ENCODE measurements at regions of chr12 and their contacts with region 1.

Region 1: DNA sequence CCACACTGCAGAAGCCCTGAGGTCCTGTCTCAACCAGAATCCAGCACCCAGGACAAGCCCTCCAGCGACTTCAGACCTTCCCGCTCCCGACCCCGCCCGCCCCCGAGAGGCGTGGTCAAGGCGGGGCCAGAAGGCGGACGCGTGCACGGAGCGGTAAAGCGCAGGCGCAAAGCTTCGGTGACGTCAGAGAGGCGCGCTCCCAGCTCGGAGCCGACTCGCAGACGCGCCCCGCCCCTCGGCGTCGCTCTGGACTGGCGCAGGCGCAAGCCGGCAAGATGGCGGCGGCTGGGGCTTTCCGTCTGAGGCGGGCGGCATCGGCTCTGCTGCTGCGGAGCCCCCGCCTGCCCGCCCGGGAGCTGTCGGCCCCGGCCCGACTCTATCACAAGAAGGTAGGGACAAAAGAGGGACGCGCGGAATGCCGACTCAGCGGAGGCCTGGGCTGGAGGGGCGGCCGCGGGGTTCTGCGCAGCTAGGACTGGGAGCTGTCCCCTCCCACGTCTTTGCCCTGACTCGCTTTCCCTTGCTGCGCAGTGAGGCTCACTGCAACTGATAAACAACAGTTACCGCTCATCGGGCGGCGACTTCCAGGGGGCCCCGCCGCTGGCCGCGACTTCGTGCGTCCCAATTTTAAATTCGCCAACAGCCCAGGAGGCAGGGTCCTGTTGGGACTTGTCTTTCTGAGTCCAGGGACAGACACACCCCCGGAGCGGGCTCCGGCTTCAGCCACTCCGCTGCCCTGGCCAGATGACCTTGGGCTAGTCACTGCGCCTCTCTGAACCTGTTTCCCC is at the start of gene ISCU:
- DNase-seq: peak; percentile 98
- H3K4me3 Mint-ChIP-seq: peak within 1 kb of the TSS; percentile 96
- H3K27ac Mint-ChIP-seq: peak within 1 kb of the TSS; percentile 99
- H3K4me1 Mint-ChIP-seq: peaks cover 22% of the 10 kb centered on the region
- H3K27me3 Mint-ChIP-seq: no peaks in the 10 kb centered on the region
- CTCF ChIP-seq: no peak
- total RNA-seq, gene ISCU: 115 and 125 TPM in 2 replicates

Region 2: DNA sequence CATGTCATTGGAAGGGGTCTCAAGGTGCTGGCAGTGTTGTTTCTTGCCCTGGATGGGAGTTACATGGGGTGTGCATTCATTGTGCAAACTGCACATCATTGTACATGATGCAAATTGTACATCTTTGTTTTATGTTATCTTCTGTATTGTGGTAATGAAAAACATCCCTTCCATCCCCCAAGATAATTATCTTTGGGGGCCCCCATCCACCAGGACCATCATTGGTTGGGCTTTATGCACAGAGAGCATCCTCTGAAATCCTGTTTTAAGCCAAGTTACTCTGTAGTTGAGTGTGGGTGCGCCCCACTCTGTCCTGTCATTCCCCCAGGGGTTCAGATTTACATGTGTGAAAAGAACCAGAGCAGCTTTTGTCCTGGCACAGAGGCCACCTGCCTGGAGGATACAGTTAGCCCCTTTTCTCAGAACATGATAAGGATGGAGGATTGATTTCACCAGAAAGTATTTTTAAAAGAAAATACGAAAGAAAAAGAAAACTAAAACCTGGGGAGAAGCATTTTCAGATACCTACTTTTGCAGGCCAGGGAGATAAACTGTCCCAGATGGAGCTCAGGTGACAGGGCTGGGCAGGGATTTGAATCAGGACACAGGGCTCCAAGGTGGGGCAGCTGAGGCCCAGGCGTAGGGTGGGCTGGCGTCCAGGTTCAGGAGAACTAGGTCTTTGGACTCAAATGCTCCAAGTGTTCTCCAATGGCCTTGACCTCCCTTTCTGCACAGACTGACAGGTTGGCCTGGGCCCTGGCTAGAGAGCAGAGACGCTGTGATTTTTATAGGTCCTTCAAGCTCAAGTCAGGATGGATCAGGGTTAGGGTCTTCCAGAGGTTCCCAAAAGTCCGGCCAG is 416.3 kb before region 1 on chr12:
- CTCF ChIA-PET with region 1: no interaction called
- POLR2A ChIA-PET with region 1: no interaction called
- intact Hi-C with region 1: no loop called
- DNase-seq: no peak
- H3K4me3 Mint-ChIP-seq: no peak overlapping the region
- H3K27ac Mint-ChIP-seq: no peak overlapping the region
- H3K4me1 Mint-ChIP-seq: no peaks in the 10 kb centered on the region
- H3K27me3 Mint-ChIP-seq: peaks cover 11% of the 10 kb centered on the region
- CTCF ChIP-seq: no peak

Region 3: DNA sequence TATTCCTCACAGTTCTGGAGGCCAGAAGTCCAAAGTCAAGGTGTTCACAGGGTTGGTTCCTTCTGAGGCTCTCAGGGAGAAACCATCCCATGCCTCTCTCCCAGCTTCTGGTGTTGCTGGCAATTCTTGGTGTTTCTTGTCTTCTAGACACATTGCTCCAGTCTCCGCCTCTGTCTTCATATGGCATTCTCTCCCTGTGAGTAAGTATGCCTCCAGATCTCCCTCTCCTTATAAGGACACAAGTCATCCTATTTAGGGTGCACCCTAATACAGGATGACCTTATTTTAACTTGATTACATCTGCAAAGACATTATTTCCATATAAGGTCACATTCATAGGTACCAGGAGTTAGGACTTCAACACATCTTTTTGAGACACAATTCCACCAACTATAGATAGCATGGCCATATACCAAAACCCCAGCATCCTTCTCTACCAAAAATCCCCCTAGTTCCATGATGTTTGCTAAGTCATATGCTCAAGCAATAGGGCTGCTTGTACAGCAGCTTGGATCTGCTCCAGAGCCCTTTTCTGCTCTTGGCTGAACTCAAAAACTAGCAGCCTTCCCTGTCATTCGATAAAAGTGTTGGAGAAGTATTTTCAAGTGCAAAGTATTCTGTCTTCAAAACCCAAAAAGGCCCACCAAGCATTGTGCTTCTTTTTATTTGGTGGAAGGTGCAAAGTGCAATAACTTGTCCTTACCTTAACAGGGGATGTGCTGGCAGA is 144.2 kb before region 1 on chr12:
- CTCF ChIA-PET with region 1: no interaction called
- POLR2A ChIA-PET with region 1: no interaction called
- intact Hi-C with region 1: no loop called
- DNase-seq: no peak
- H3K4me3 Mint-ChIP-seq: no peak overlapping the region
- H3K27ac Mint-ChIP-seq: no peak overlapping the region
- H3K4me1 Mint-ChIP-seq: peaks cover 7% of the 10 kb centered on the region
- H3K27me3 Mint-ChIP-seq: peaks cover 3% of the 10 kb centered on the region
- CTCF ChIP-seq: no peak

Region 4: DNA sequence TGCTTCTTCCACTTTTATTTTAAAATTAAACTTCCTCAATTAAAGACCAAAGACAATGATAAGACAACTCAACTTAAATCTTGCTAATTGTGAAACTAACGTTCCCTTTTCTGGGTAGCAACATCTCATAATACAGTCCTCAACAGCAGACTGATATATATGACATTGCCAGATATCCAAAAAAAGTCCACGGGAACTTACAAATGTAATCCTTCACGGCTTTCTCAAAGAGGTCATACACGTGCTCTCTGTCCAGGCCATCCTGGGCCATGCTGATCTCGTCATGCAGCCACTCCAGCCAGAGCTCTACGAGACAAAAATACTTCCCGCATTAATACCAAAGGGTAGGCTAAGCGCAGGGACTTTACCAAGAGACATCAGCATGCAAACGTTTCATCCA is 14.9 kb before region 1 on chr12:
- CTCF ChIA-PET with region 1: interaction called, 5 read pairs
- POLR2A ChIA-PET with region 1: interaction called, 27 read pairs
- intact Hi-C with region 1: no loop called
- DNase-seq: no peak
- H3K4me3 Mint-ChIP-seq: no peak overlapping the region
- H3K27ac Mint-ChIP-seq: no peak overlapping the region
- H3K4me1 Mint-ChIP-seq: peaks cover 18% of the 10 kb centered on the region
- H3K27me3 Mint-ChIP-seq: no peaks in the 10 kb centered on the region
- CTCF ChIP-seq: no peak

Region 5: GRCh38 chr12:108618079-108618952 is 55.8 kb after region 1 on chr12:
- CTCF ChIA-PET with region 1: interaction called, 274 read pairs
- POLR2A ChIA-PET with region 1: interaction called, 105 read pairs
- intact Hi-C with region 1: loop called (anchors 1 kb)
- DNase-seq: peak; percentile 85
- H3K4me3 Mint-ChIP-seq: no peak overlapping the region
- H3K27ac Mint-ChIP-seq: no peak overlapping the region
- H3K4me1 Mint-ChIP-seq: no peaks in the 10 kb centered on the region
- H3K27me3 Mint-ChIP-seq: no peaks in the 10 kb centered on the region
- CTCF ChIP-seq: peak; percentile 94

Region 6: DNA sequence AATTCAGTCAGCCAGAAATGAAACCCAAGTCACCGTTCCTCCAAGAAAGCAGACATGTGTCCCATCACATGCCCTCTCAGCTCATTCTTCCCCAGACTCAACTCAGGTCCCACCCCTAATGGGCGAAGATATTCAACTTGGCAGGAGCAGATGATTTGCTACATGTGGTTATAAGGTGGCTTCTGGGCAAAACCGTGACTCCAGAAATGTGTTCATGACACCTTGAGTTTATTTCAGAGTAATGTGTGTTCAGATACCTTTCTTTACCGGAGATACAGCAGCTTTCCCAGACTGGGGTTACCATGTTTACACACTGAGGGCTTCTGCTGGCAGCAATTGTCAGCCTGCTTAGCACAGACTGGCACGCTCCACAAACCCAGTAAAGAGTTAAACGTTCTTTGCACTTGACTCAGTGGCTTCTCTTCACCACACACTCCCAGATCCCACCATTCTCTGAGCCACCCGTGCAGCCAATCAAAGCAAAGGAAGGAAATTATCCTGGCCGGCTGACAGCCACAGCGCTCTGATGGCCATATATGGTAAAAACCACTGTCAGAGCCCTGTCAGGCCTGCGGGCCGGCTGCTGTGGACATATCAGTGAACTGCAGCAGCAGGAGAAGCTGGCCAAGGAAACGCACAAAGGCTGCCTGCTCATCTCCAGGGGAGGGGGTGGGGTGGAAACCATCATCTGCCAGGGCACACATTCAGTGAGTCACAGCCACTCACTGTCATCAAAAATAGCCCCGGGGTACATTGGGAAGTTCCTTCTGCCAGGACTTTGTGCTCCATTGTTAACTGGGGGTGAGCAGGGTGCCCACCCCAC is 128.8 kb after region 1 on chr12:
- CTCF ChIA-PET with region 1: no interaction called
- POLR2A ChIA-PET with region 1: interaction called, 16 read pairs
- intact Hi-C with region 1: no loop called
- DNase-seq: peak; percentile 100
- H3K4me3 Mint-ChIP-seq: peak overlapping the region; percentile 71
- H3K27ac Mint-ChIP-seq: peak overlapping the region; percentile 98
- H3K4me1 Mint-ChIP-seq: peaks cover 46% of the 10 kb centered on the region
- H3K27me3 Mint-ChIP-seq: no peaks in the 10 kb centered on the region
- CTCF ChIP-seq: peak; percentile 22

Region 7: GRCh38 chr12:108803428-108804105 is 241.0 kb after region 1 on chr12:
- CTCF ChIA-PET with region 1: interaction called, 8 read pairs
- POLR2A ChIA-PET with region 1: no interaction called
- intact Hi-C with region 1: loop called (anchors 1 kb)
- DNase-seq: peak; percentile 88
- H3K4me3 Mint-ChIP-seq: no peak overlapping the region
- H3K27ac Mint-ChIP-seq: no peak overlapping the region
- H3K4me1 Mint-ChIP-seq: no peaks in the 10 kb centered on the region
- H3K27me3 Mint-ChIP-seq: no peaks in the 10 kb centered on the region
- CTCF ChIP-seq: peak; percentile 96

Region 8: DNA sequence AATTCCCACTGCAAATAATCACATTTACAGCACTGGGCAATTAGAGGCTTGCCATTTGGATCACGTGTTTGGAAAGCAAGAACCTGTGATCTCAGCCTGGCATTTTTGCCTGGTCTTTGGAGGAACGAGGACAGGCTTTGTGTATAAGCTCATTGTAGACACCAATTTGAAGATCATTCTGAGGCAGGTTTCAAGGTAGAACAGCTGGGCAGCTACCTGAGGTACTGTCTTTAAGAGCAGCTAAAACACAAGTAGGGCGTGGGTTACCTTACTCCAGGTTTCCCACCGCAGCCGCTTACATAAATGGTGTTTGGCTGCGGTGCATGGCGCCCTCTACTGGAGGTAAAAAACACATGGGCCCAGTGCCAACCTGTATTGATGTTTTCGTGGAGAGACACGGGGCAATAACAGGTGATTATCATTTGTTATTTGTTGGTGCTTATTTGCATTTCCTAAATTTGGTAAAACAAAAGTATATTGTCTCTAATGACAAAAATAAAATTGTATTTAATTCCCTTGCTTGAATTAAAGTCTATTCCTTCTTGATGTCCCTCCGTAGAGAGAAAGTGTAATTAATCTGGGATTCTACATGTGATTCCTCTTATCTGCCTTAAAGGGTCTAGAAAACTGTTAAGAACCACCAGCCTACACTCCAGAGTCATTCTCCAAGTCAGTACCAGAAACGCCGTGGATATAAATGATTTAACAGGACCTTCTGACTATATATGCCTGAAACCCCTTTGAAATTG is 388.6 kb after region 1 on chr12:
- CTCF ChIA-PET with region 1: interaction called, 14 read pairs
- POLR2A ChIA-PET with region 1: interaction called, 4 read pairs
- intact Hi-C with region 1: loop called (anchors 2 kb)
- DNase-seq: peak; percentile 79
- H3K4me3 Mint-ChIP-seq: no peak overlapping the region
- H3K27ac Mint-ChIP-seq: no peak overlapping the region
- H3K4me1 Mint-ChIP-seq: peaks cover 14% of the 10 kb centered on the region
- H3K27me3 Mint-ChIP-seq: peaks cover 2% of the 10 kb centered on the region
- CTCF ChIP-seq: peak; percentile 81

Measured in MCF 10A (cell line).